ENCODE measurements at regions of chrX and their contacts with region 1.

Region 1: GRCh38 chrX:1453951-1454785 is 1.5 kb upstream of the ASMTL start:
- DNase-seq: peak; percentile 87 to 97 (median 92)
- ATAC-seq: peak; percentile 33
- H3K4me3 ChIP-seq: peak overlapping the region; percentile 33 to 40
- H3K4me3 Mint-ChIP-seq: peak overlapping the region; percentile 74
- H3K27ac ChIP-seq: peak overlapping the region; percentile 41 to 96
- H3K27ac Mint-ChIP-seq: peak overlapping the region; percentile 82
- H3K4me1 ChIP-seq: peaks cover 41% of the 10 kb centered on the region
- H3K4me1 Mint-ChIP-seq: peaks cover 22% of the 10 kb centered on the region
- H3K27me3 ChIP-seq: no peaks in the 10 kb centered on the region
- H3K27me3 Mint-ChIP-seq: no peaks in the 10 kb centered on the region
- CTCF ChIP-seq: peak; percentile 98

Region 2: DNA sequence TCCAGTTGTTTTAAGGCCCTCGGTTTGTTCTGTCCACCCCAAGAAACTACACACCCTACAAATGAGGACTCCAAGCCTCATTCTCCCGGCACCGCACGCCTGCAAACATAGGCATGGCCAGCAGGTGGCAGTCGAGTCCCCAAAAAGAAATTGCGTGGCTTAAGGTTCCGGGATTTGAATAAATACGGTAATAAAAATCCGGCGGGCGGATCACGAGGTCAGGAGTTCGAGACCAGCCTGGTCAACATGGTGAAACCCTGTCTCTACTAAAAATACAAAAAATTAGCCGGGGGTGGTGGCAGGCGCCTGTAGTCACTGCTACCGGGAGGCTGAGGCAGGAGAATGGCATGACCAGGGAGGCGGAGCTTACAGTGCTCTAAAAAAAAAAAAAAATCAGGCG is 207.4 kb before region 1 on chrX:
- CTCF ChIA-PET with region 1: no interaction called
- POLR2A ChIA-PET with region 1: no interaction called
- intact Hi-C with region 1: loop called (anchors 5 to 10 kb)
- DNase-seq: peak; percentile 59 to 89 (median 74)
- ATAC-seq: peak; percentile 67
- H3K4me3 ChIP-seq: no peak overlapping the region
- H3K4me3 Mint-ChIP-seq: no peak overlapping the region
- H3K27ac ChIP-seq: no peak overlapping the region
- H3K27ac Mint-ChIP-seq: peak overlapping the region; percentile 27
- H3K4me1 ChIP-seq: peaks cover 16% of the 10 kb centered on the region
- H3K4me1 Mint-ChIP-seq: peaks cover 15% of the 10 kb centered on the region
- H3K27me3 ChIP-seq: no peaks in the 10 kb centered on the region
- H3K27me3 Mint-ChIP-seq: no peaks in the 10 kb centered on the region
- CTCF ChIP-seq: peak; percentile 75

Region 3: GRCh38 chrX:1481636-1482529 is 27.7 kb after region 1 on chrX:
- CTCF ChIA-PET with region 1: no interaction called
- POLR2A ChIA-PET with region 1: no interaction called
- intact Hi-C with region 1: loop called (anchors 1 kb)
- DNase-seq: peak; percentile 54 to 94 (median 76)
- ATAC-seq: peak; percentile 82
- H3K4me3 ChIP-seq: peak overlapping the region; percentile 18 to 32
- H3K4me3 Mint-ChIP-seq: peak overlapping the region; percentile 64
- H3K27ac ChIP-seq: peak overlapping the region; percentile 66 to 91
- H3K27ac Mint-ChIP-seq: peak overlapping the region; percentile 96
- H3K4me1 ChIP-seq: peaks cover 58% of the 10 kb centered on the region
- H3K4me1 Mint-ChIP-seq: peaks cover 63% of the 10 kb centered on the region
- H3K27me3 ChIP-seq: no peaks in the 10 kb centered on the region
- H3K27me3 Mint-ChIP-seq: no peaks in the 10 kb centered on the region
- CTCF ChIP-seq: no peak

Region 4: GRCh38 chrX:1580735-1581531 is 126.8 kb after region 1 on chrX:
- CTCF ChIA-PET with region 1: no interaction called
- POLR2A ChIA-PET with region 1: no interaction called
- intact Hi-C with region 1: loop called (anchors 1 kb)
- DNase-seq: peak; percentile 48 to 85 (median 72)
- ATAC-seq: peak; percentile 92
- H3K4me3 ChIP-seq: no peak overlapping the region
- H3K4me3 Mint-ChIP-seq: no peak overlapping the region
- H3K27ac ChIP-seq: no peak overlapping the region
- H3K27ac Mint-ChIP-seq: no peak overlapping the region
- H3K4me1 ChIP-seq: peaks cover 43% of the 10 kb centered on the region
- H3K4me1 Mint-ChIP-seq: peaks cover 10% of the 10 kb centered on the region
- H3K27me3 ChIP-seq: no peaks in the 10 kb centered on the region
- H3K27me3 Mint-ChIP-seq: no peaks in the 10 kb centered on the region
- CTCF ChIP-seq: peak; percentile 85

Region 5: DNA sequence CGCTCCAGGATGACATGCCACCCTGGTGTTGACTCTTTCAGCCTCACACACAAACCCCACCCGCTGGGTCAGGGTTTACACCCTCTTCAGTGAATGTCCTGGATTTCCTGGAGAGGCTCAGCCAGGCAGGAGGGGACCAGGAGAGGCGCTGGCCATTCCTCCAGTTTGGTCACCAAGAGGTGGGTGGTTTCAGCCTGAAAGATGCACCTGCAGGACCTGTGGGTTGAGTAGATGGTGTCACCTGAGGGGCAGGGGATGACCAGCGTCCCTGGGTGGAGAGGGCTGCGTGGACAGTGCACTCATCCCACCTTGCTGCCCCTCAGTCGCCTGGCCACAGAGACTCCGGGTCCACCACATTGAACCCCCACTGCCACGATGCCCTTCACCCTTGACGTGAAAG is 340.4 kb after region 1 on chrX:
- CTCF ChIA-PET with region 1: no interaction called
- POLR2A ChIA-PET with region 1: no interaction called
- intact Hi-C with region 1: no loop called
- DNase-seq: no peak
- ATAC-seq: no peak
- H3K4me3 ChIP-seq: no peak overlapping the region
- H3K4me3 Mint-ChIP-seq: no peak overlapping the region
- H3K27ac ChIP-seq: no peak overlapping the region
- H3K27ac Mint-ChIP-seq: no peak overlapping the region
- H3K4me1 ChIP-seq: no peaks in the 10 kb centered on the region
- H3K4me1 Mint-ChIP-seq: no peaks in the 10 kb centered on the region
- H3K27me3 ChIP-seq: peaks cover 0 to 4% of the 10 kb centered on the region in 2 experiments
- H3K27me3 Mint-ChIP-seq: no peaks in the 10 kb centered on the region
- CTCF ChIP-seq: no peak

Region 6: DNA sequence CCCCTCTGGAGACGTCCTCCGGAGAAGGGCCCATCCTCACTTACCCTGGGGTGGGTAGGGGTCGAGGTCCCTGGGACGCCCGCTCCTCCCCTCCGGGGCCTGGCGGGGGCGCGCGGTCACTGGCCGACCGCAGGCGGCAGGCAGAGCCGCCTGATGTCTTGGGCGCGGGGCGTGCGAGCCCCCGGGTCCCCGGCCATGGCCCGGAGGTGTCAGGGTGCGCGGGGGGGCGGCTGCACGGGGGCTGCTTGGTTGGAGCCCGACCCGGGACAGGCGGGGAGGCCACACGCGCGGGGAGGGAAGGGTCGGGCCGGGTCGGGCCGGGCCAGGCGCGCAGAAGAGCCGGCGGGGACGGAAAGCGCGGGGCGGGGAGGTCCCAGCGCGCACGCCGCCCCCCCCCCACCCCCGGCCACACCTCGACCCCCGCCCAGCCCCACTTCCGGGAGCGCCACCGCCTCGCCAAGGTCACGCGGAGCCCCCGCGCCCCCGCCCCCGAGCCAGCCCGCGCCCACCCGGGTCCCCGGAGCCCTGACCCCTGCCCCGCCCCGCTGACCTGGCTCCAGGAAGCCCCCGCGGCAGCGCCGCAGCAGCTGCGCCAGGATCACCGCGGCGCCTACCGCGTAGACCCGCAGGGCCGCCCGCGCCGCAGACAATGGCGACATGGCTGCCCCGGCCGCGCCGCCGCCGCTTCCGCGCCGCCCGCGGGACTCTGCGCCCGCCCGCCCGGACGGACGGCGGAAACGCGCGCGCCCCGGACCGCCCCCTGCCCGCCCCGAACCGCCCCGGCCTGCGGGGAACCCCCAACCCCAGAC is 1046.3 kb after region 1 on chrX and contains the starts of genes DHRSX and ZBED1:
- CTCF ChIA-PET with region 1: no interaction called
- POLR2A ChIA-PET with region 1: no interaction called
- intact Hi-C with region 1: loop called in 1 of 2 experiments (anchors 10 kb)
- DNase-seq: peak in 8 of 9 experiments; percentile 29 to 72 (median 48)
- ATAC-seq: peak; percentile 64
- H3K4me3 ChIP-seq: peak within 1 kb of the TSS; percentile 66 to 67
- H3K4me3 Mint-ChIP-seq: peak within 1 kb of the TSS; percentile 88
- H3K27ac ChIP-seq: peak within 1 kb of the TSS; percentile 68 to 76
- H3K27ac Mint-ChIP-seq: peak within 1 kb of the TSS; percentile 93
- H3K4me1 ChIP-seq: peaks cover 12% of the 10 kb centered on the region
- H3K4me1 Mint-ChIP-seq: peaks cover 35% of the 10 kb centered on the region
- H3K27me3 ChIP-seq: no peaks in the 10 kb centered on the region
- H3K27me3 Mint-ChIP-seq: no peaks in the 10 kb centered on the region
- CTCF ChIP-seq: no peak
- total RNA-seq, gene DHRSX: 9.9 to 10.8 TPM
- total RNA-seq, gene ZBED1: 13.4 to 14.8 TPM

Region 7: GRCh38 chrX:2627272-2627867 is 1173.2 kb after region 1 on chrX:
- CTCF ChIA-PET with region 1: no interaction called
- POLR2A ChIA-PET with region 1: no interaction called
- intact Hi-C with region 1: loop called in 1 of 2 experiments (anchors 2 kb)
- DNase-seq: peak in 6 of 9 experiments; percentile 39 to 69 (median 50)
- ATAC-seq: peak; percentile 33
- H3K4me3 ChIP-seq: no peak overlapping the region
- H3K4me3 Mint-ChIP-seq: no peak overlapping the region
- H3K27ac ChIP-seq: no peak overlapping the region
- H3K27ac Mint-ChIP-seq: peak overlapping the region; percentile 58
- H3K4me1 ChIP-seq: peaks cover 16% of the 10 kb centered on the region
- H3K4me1 Mint-ChIP-seq: peaks cover 48% of the 10 kb centered on the region
- H3K27me3 ChIP-seq: no peaks in the 10 kb centered on the region
- H3K27me3 Mint-ChIP-seq: no peaks in the 10 kb centered on the region
- CTCF ChIP-seq: peak; percentile 43

Measured in CD8-positive, alpha-beta T cell (primary cell).